GM10248 (cell line): ENCODE measurements at regions of chr14 and their contacts with region 1.

Region 1: GRCh38 chr14:94761348-94761996 is 8.4 kb downstream of the GSC start:
- DNase-seq: no peak
- CTCF ChIP-seq: no peak

Region 2: GRCh38 chr14:94728950-94729349 is 32.5 kb before region 1 on chr14:
- CTCF ChIA-PET with region 1: no interaction called
- POLR2A ChIA-PET with region 1: no interaction called
- DNase-seq: no peak
- CTCF ChIP-seq: no peak

Region 3: DNA sequence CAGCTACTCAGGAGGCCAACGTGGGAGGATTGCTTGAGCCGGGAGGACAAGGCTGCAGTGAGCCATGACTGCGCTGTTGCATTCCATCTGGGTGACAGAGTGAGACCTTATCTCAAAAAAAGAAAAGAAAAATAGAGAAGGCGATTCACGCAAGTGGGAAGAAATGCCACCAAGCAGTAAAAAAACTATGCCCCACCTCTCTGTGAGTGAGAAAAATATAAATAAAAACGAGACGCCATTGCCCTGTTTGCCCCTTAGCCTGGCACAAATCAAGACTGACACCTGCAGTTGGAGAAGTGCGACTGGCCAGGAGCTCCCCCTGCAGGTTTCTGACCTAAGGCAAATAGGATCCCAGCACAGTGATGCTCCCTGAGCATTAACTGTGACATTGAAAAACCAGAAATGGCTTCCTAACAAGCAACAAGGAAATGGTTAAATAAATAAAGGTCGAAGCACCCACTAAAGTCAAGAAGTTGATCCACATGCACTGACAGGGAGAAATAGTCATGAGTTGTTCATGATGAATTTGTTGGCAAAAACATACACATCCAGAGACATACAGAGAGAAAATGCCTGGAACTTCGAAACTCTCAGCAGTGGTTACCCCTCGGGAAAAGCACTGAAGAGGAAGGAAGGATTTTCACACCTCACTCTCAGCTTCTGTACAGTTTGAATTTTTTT is 12.7 kb before region 1 on chr14:
- CTCF ChIA-PET with region 1: interaction called, 12 read pairs
- POLR2A ChIA-PET with region 1: no interaction called
- DNase-seq: no peak
- CTCF ChIP-seq: peak; percentile 67